Aorta (tissue), 5 donors: ENCODE measurements at regions of chr13 and their contacts with region 1.

Region 1: DNA sequence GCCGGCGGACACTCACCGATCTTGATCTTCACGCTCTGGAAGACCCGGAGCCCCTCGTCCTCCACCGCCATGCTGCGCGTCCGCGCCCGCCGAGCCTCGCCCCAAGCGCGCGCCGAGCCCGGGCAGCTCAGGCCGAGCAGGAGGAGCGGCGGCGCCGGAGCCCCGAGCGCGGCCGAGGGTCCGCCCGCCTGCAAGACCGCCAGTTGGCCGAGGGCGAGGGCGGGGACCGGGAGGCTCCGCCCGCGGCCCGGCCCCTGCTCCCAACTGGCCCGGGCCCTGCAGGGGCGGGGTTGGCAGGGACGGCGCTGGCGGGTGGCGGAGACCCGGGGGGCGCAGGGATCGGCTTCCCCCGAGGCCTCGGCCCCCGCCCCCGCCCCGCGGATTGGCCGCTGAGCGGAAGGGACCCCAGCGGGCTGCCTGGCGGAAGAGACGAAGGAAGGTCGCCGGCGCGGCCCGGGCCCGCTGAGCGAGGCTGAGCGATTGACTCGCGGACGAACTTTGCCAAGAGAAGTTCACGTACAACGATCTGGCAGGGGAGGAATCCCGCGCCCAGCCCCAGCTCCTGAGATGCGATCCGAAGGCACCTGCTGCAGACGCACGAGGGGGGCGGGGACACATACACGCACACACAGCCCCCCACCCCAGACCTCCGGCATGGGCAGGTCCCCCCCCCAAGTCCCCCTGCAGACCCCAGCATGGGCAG is at the start of gene RASA3:
- DNase-seq: peak; percentile 87 to 92
- ATAC-seq: peak; percentile 90
- H3K4me3 ChIP-seq: peak within 1 kb of the TSS; percentile 45 to 79
- H3K27ac ChIP-seq: peak within 1 kb of the TSS in 1 of 2 donors; percentile 38
- H3K4me1 ChIP-seq: no peaks in the 10 kb centered on the region
- H3K27me3 ChIP-seq: no peaks in the 10 kb centered on the region
- total RNA-seq, gene RASA3: 34.8 to 42.3 TPM

Region 2: DNA sequence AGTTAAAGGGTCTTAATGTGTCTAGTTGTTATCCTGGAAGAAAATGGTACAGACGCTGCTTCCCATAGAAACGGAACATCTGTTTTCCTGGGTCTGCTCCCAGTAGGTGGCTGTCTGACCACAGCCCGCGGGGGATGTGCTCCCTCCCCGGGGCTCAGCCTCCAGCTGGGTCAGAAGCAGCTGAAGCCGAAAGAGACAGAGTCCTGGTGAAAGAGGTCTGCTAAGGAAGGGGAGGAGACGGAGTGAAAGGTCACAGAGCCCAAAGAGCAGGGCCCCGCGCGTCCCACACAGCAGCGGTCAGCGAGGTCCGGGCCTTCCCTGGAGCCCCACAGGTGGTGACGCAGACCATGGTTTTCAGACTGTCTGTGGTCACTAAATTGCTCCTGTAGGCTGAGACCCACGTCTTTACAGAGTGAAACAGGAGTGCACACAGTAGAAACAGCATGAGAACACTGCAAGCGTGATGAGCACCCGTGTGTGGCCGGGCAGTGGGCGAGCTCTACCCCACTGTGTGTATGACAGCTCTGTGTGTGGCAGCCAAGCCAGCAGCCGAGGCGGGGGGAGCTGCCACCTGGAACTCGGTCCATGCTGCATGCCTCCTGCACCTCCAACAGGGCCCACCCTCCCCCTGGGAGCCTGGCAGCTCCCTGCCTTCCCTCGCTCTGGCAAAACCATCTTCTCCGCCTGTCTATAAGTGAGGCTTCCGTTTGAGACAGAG is 106.7 kb before region 1 on chr13:
- intact Hi-C with region 1: loop called in 1 of 2 experiments (anchors 5 kb)
- DNase-seq: no peak
- ATAC-seq: no peak
- H3K4me3 ChIP-seq: no peak overlapping the region
- H3K27ac ChIP-seq: no peak overlapping the region
- H3K4me1 ChIP-seq: no peaks in the 10 kb centered on the region
- H3K27me3 ChIP-seq: no peaks in the 10 kb centered on the region